Caco-2 (cell line): ENCODE measurements at regions of chr5 and their contacts with region 1.

Region 1: GRCh38 chr5:127030259-127031146 is at the start of gene MARCHF3:
- DNase-seq: peak; percentile 94 to 97
- H3K4me3 ChIP-seq: peak within 1 kb of the TSS; percentile 68
- H3K4me3 Mint-ChIP-seq: peak within 1 kb of the TSS; percentile 75
- H3K27ac Mint-ChIP-seq: no peak within 1 kb of the TSS
- H3K4me1 ChIP-seq: no peaks in the 10 kb centered on the region
- H3K4me1 Mint-ChIP-seq: peaks cover 11% of the 10 kb centered on the region
- H3K27me3 ChIP-seq: no peaks in the 10 kb centered on the region; the same call in 1 of the 2 replicates
- H3K27me3 Mint-ChIP-seq: peaks cover 30% of the 10 kb centered on the region
- CTCF ChIP-seq: peak; percentile 33 to 42
- total RNA-seq, gene MARCHF3: 0.49 and 0.61 TPM in 2 replicates

Region 2: DNA sequence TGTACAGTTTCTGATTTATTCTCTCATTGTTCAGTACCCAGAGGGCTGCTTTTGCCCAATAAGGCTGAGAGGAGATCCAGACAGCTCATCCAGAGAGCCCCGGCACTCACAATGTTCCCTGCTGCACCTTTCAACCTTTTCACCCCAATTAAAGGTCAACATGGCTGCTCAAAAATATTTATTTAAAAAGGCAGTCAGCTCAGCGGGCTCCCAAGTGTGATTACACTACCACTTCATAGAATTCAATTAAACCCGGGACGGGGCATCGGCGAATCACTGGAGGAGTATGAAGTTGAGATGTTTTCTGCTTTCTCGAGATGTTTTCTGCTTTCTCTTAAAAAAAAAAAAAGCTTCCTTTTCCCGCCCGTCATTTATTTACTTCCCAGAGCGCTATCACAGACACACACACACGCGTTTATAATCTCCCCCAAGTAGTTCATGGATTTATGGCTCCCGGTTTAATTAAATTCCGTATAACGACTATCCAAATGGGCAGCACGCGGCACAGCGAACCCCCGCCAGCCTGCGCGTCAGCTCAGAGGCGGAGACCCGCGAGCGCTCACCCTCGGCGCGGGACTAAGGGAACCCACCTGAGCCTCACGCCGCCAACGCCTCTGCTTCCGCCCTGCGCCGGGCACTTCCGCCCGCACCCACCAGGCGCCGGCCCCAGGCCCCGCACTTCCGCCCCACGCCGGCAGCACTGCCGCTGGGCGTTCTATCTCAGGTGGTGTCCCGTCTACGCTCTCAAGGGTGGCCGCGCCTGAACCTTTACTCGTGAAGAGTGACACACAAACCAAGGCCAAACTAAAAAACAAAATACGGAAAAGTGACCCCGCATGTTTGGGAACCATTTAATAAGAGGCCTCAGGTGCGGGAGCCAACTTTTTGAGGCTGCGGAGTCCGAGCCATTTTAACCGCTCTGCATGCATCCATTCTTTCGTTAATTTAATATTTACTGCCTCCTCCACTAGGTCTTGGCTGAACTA is 42.7 kb after region 1 on chr5 and contains the start of gene C5orf63:
- CTCF ChIA-PET with region 1: no interaction called
- POLR2A ChIA-PET with region 1: no interaction called
- intact Hi-C with region 1: loop called (anchors 5 kb)
- DNase-seq: peak; percentile 78 to 79
- H3K4me3 ChIP-seq: peak within 1 kb of the TSS; percentile 50
- H3K4me3 Mint-ChIP-seq: peak within 1 kb of the TSS; percentile 77
- H3K27ac Mint-ChIP-seq: peak within 1 kb of the TSS; percentile 73
- H3K4me1 ChIP-seq: peaks cover 15% of the 10 kb centered on the region
- H3K4me1 Mint-ChIP-seq: peaks cover 9% of the 10 kb centered on the region
- H3K27me3 ChIP-seq: no peaks in the 10 kb centered on the region
- H3K27me3 Mint-ChIP-seq: no peaks in the 10 kb centered on the region
- CTCF ChIP-seq: peak; percentile 25 to 39
- total RNA-seq, gene C5orf63: 7.6 and 10.5 TPM in 2 replicates

Region 3: DNA sequence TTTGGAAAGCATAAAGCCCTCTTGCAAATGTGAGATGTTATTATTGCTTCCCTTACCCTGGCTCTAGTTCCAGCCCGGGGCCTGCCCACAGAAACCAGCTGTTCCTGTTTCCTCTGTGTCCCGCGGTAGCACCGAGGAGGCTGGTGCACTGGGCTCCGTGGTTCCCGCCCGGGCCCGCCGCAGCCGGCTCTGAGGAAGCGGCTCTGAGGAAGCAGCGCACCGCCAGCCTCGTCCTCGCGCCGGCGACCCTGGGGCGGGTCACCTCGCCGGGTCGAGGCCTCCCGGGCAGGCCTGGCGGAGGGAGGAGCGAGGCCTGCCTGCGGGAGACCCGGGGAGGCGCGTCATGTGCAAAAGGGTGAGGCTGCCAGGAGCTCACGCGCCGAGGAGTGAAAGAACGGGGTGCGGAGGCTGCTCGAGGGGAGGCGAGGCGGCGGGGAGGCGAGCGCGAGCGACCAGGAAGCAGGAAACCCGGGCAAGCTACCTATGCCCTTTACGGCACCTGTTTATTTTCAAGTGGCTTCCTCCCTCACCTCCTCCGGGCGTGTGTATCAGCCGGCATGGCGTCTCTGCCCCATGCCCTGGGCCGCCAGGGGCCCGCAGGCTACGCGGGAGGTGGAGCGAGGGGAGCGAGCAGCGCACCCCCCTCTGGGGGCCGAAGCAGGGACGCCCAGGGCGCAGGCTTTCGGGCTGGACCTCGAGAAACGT is 198.8 kb after region 1 on chr5:
- CTCF ChIA-PET with region 1: interaction called, 5 read pairs
- POLR2A ChIA-PET with region 1: no interaction called
- intact Hi-C with region 1: loop called (anchors 5 kb)
- DNase-seq: peak; percentile 60 to 64
- H3K4me3 ChIP-seq: peak overlapping the region; percentile 60
- H3K4me3 Mint-ChIP-seq: peak overlapping the region; percentile 70
- H3K27ac Mint-ChIP-seq: no peak overlapping the region
- H3K4me1 ChIP-seq: no peaks in the 10 kb centered on the region
- H3K4me1 Mint-ChIP-seq: no peaks in the 10 kb centered on the region
- H3K27me3 ChIP-seq: no peaks in the 10 kb centered on the region
- H3K27me3 Mint-ChIP-seq: peaks cover 10% of the 10 kb centered on the region
- CTCF ChIP-seq: peak in 1 of 2 experiments; percentile 56

Region 4: GRCh38 chr5:127517480-127518318 is 487.2 kb after region 1 on chr5 and contains the start of gene PRRC1:
- CTCF ChIA-PET with region 1: no interaction called
- POLR2A ChIA-PET with region 1: no interaction called
- intact Hi-C with region 1: loop called (anchors 1 kb)
- DNase-seq: peak; percentile 85 to 87
- H3K4me3 ChIP-seq: peak within 1 kb of the TSS; percentile 92
- H3K4me3 Mint-ChIP-seq: peak within 1 kb of the TSS; percentile 79
- H3K27ac Mint-ChIP-seq: peak within 1 kb of the TSS; percentile 78
- H3K4me1 ChIP-seq: peaks cover 4% of the 10 kb centered on the region; the same call in 1 of the 2 replicates
- H3K4me1 Mint-ChIP-seq: peaks cover 13% of the 10 kb centered on the region
- H3K27me3 ChIP-seq: no peaks in the 10 kb centered on the region
- H3K27me3 Mint-ChIP-seq: no peaks in the 10 kb centered on the region
- CTCF ChIP-seq: no peak
- total RNA-seq, gene PRRC1: 81.0 and 81.7 TPM in 2 replicates